ENCODE measurements at regions of chr5 and their contacts with region 1.

Region 1: DNA sequence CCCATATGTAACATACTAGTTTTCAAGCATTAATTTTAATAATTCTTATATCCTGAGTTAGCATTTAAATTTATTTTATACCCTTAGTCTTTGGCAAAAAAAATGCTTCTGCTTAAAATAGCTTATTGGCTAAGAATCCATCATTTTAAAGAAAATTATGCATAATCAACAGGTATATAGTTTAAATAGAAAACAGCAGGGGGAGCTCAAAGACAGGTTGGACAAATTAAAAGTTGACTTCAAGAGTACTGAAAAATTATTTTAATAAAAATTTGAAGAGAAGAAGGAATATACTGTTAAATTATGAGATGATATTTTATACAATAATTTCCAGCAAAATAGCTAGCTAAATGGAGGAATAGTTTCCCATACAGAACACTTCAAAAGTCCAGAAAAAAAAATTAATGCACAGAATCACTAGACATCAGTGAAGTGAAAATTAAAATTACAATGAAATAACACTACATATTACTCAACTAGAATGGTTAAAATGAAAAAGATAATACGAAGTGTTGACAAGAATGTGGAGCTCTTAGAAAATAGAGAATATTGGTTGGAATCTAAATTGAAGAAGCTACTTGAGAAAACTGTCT is 387.1 kb downstream of the PDE4D start:
- DNase-seq: no peak
- ATAC-seq: no peak
- H3K4me3 ChIP-seq: no peak overlapping the region
- H3K27ac ChIP-seq: no peak overlapping the region
- H3K4me1 ChIP-seq: peaks cover 41% of the 10 kb centered on the region
- H3K27me3 ChIP-seq: no peaks in the 10 kb centered on the region
- CTCF ChIP-seq: peak; percentile 66

Region 2: GRCh38 chr5:59587489-59588337 is 81.3 kb after region 1 on chr5:
- intact Hi-C with region 1: loop called in 1 of 2 experiments (anchors 5 kb)
- DNase-seq: peak; percentile 78 to 90
- ATAC-seq: peak; percentile 81 to 89 (median 84)
- H3K4me3 ChIP-seq: peak overlapping the region; percentile 77
- H3K27ac ChIP-seq: peak overlapping the region; percentile 84
- H3K4me1 ChIP-seq: peaks cover 21% of the 10 kb centered on the region
- H3K27me3 ChIP-seq: no peaks in the 10 kb centered on the region
- CTCF ChIP-seq: peak; percentile 34

Region 3: GRCh38 chr5:59660737-59661136 is 154.4 kb after region 1 on chr5:
- intact Hi-C with region 1: loop called in 1 of 2 experiments (anchors 2 kb)
- DNase-seq: no peak
- ATAC-seq: peak; percentile 39 to 63 (median 50)
- H3K4me3 ChIP-seq: no peak overlapping the region
- H3K27ac ChIP-seq: peak overlapping the region; percentile 73
- H3K4me1 ChIP-seq: peaks cover 58% of the 10 kb centered on the region
- H3K27me3 ChIP-seq: no peaks in the 10 kb centered on the region
- CTCF ChIP-seq: peak; percentile 46